Naive thymus-derived CD4-positive, alpha-beta T cell (primary cell): ENCODE measurements at regions of chr1 and their contacts with region 1.

Region 1: DNA sequence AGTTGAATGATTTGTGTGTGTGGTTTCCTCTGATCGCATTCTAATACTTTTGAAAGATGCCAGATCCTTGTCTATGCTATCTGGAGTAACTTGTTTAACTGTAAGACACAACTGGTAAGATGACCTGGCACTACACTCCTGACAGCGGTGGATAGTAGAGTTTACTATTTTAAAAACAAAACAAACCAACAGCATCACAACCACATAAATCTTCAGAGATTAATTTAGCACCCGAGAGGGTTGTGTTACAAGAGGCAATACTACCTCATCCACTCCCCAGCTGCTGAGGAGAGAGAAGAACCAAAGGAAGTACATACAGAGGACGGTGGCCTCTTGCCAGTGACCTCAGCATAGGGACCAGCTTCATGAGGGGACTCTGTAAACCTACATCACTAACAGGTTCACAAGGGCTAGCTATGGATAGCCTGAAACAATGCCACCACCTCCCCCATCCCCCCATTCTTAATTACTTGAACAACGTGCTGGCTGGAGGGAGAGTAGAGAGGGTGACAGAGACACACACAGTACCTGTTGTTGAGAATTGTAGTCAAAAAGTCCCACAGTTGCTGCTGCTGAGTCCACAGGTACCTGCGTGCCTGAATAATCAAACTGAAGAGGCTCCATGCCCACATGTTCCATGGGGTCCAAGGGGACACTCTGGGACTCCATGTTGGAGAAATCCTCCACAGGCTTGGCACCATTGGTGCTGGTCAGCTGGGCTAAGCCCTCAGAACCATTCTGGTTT is 73.5 kb downstream of the PUM1 start:
- DNase-seq: no peak
- ATAC-seq: no peak
- H3K4me3 ChIP-seq: no peak overlapping the region
- H3K4me3 Mint-ChIP-seq: no peak overlapping the region
- H3K27ac ChIP-seq: no peak overlapping the region
- H3K27ac Mint-ChIP-seq: peak overlapping the region in 3 of 9 donors; percentile 1 to 16 (median 2)
- H3K4me1 ChIP-seq: no peaks in the 10 kb centered on the region
- H3K4me1 Mint-ChIP-seq: peaks cover 44 to 87% (median 78%) of the 10 kb centered on the region in 7 donors
- H3K27me3 ChIP-seq: no peaks in the 10 kb centered on the region
- H3K27me3 Mint-ChIP-seq: no peaks in the 10 kb centered on the region

Region 2: GRCh38 chr1:30911046-30911954 is 80.7 kb before region 1 on chr1:
- CTCF ChIA-PET with region 1: no interaction called
- POLR2A ChIA-PET with region 1: no interaction called
- intact Hi-C with region 1: no loop called
- DNase-seq: peak in 2 of 9 donors; percentile 12 to 54
- ATAC-seq: peak; percentile 60
- H3K4me3 ChIP-seq: no peak overlapping the region
- H3K4me3 Mint-ChIP-seq: no peak overlapping the region
- H3K27ac ChIP-seq: no peak overlapping the region
- H3K27ac Mint-ChIP-seq: peak overlapping the region in 1 of 9 donors; percentile 66
- H3K4me1 ChIP-seq: peaks cover 0 to 6% of the 10 kb centered on the region in 2 donors
- H3K4me1 Mint-ChIP-seq: peaks cover 9 to 18% (median 15%) of the 10 kb centered on the region in 7 donors
- H3K27me3 ChIP-seq: peaks cover 0 to 4% of the 10 kb centered on the region in 2 donors
- H3K27me3 Mint-ChIP-seq: peaks cover 17 to 38% (median 19%) of the 10 kb centered on the region in 5 donors

Region 3: DNA sequence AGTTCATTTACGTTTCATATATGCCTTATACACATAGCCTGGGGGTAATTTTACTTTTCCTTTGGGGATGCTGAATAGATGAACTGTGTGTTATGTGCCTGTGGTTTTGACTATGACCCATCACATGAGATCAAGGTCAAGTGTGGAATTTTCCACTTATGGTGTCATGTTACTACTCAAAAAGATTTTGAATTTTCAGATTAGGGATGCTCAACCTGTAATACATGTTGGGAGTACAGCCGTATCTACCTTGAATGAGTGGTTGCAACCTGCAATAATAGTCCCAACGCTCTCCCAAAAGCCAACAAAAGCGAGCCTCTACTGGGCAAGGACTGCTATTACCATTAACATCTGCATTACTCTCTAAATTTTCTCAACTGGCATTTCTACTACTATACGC is 14.9 kb before region 1 on chr1:
- CTCF ChIA-PET with region 1: no interaction called
- POLR2A ChIA-PET with region 1: no interaction called
- intact Hi-C with region 1: loop called in 1 of 2 experiments (anchors 2 kb)
- DNase-seq: no peak
- ATAC-seq: no peak
- H3K4me3 ChIP-seq: no peak overlapping the region
- H3K4me3 Mint-ChIP-seq: peak overlapping the region in 4 of 10 donors; percentile 4 to 38 (median 16)
- H3K27ac ChIP-seq: no peak overlapping the region
- H3K27ac Mint-ChIP-seq: peak overlapping the region in 8 of 9 donors; percentile 5 to 83 (median 68)
- H3K4me1 ChIP-seq: no peaks in the 10 kb centered on the region
- H3K4me1 Mint-ChIP-seq: peaks cover 17 to 63% (median 46%) of the 10 kb centered on the region in 7 donors
- H3K27me3 ChIP-seq: no peaks in the 10 kb centered on the region
- H3K27me3 Mint-ChIP-seq: no peaks in the 10 kb centered on the region